ENCODE measurements at regions of chr18 and their contacts with region 1.

Region 1: GRCh38 chr18:12702221-12703095 is at the starts of genes CEP76 and PSMG2:
- DNase-seq: peak; percentile 80
- H3K4me3 Mint-ChIP-seq: peak within 1 kb of the TSS; percentile 97
- H3K27ac Mint-ChIP-seq: peak within 1 kb of the TSS; percentile 97
- H3K4me1 Mint-ChIP-seq: peaks cover 41% of the 10 kb centered on the region
- H3K27me3 Mint-ChIP-seq: no peaks in the 10 kb centered on the region
- total RNA-seq, gene CEP76: 14.8 to 18.0 TPM
- total RNA-seq, gene PSMG2: 99.2 to 107 TPM

Region 2: DNA sequence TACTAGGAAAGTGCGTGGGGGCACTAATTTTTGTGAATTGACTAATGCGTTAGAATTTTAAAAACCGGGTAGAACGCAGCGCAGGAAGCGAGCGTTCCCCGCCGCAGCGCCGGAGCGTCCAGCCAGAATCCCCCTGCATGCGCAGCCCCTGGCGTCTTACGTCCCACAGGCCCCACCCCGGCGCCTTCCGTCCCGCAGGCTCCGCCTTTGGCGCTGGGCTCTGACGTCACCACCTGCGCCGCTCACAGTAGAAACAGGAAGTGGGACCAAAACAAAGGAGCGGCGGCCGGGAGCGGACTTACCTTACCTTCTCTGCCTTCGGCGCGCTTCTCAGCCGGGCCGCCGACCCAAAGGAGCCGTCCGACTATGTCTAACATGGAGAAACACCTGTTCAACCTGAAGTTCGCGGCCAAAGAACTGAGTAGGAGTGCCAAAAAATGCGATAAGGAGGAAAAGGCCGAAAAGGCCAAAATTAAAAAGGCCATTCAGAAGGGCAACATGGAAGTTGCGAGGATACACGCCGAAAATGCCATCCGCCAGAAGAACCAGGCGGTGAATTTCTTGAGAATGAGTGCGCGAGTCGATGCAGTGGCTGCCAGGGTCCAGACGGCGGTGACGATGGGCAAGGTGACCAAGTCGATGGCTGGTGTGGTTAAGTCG is 851.2 kb before region 1 on chr18 and contains the start of gene CHMP1B:
- CTCF ChIA-PET with region 1: no interaction called
- intact Hi-C with region 1: loop called (anchors 5 kb)
- DNase-seq: peak; percentile 98
- H3K4me3 Mint-ChIP-seq: peak within 1 kb of the TSS; percentile 100
- H3K27ac Mint-ChIP-seq: peak within 1 kb of the TSS; percentile 100
- H3K4me1 Mint-ChIP-seq: peaks cover 31% of the 10 kb centered on the region
- H3K27me3 Mint-ChIP-seq: no peaks in the 10 kb centered on the region
- total RNA-seq, gene CHMP1B: 23.2 TPM

Region 3: GRCh38 chr18:12408247-12408869 is 294.1 kb before region 1 on chr18:
- CTCF ChIA-PET with region 1: no interaction called
- intact Hi-C with region 1: loop called (anchors 5 kb)
- DNase-seq: no peak
- H3K4me3 Mint-ChIP-seq: peak overlapping the region; percentile 72
- H3K27ac Mint-ChIP-seq: no peak overlapping the region
- H3K4me1 Mint-ChIP-seq: peaks cover 13% of the 10 kb centered on the region
- H3K27me3 Mint-ChIP-seq: peaks cover 38% of the 10 kb centered on the region

Region 4: DNA sequence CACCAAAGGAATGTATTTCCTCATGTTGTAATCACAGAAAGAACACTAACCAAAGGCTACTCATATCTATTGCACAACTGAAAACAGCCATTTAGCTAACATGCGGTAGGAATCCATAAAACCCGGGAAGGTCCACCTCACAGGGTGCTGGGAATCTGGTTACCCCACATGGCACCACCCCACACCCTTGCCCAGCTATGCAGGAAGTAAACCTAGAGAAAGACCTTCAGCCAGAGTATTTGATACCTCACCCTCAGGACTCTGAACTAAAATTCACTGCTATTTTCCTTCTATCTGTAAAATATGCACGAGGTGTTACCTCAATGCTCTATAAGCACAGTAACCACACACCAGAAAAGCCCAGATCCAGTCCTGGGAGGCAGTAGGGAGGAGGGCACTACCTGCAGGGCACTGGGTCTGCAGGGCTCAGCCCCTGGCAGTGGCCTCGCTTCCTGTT is 135.7 kb after region 1 on chr18:
- CTCF ChIA-PET with region 1: no interaction called
- intact Hi-C with region 1: loop called (anchors 2 kb)
- DNase-seq: no peak
- H3K4me3 Mint-ChIP-seq: peak overlapping the region; percentile 46
- H3K27ac Mint-ChIP-seq: peak overlapping the region; percentile 84
- H3K4me1 Mint-ChIP-seq: peaks cover 52% of the 10 kb centered on the region
- H3K27me3 Mint-ChIP-seq: no peaks in the 10 kb centered on the region

Region 5: GRCh38 chr18:12990967-12991838 is 288.7 kb after region 1 on chr18 and contains the start of gene CEP192:
- CTCF ChIA-PET with region 1: no interaction called
- intact Hi-C with region 1: loop called (anchors 1 kb)
- DNase-seq: peak; percentile 99
- H3K4me3 Mint-ChIP-seq: peak within 1 kb of the TSS; percentile 99
- H3K27ac Mint-ChIP-seq: peak within 1 kb of the TSS; percentile 97
- H3K4me1 Mint-ChIP-seq: peaks cover 10% of the 10 kb centered on the region
- H3K27me3 Mint-ChIP-seq: no peaks in the 10 kb centered on the region
- total RNA-seq, gene CEP192: 32.7 to 33.6 TPM

Measured in activated naive CD4-positive, alpha-beta T cell treated with anti-CD3 and anti-CD28 coated beads for 36 hours (primary cell).